GM23248 (cell line): ENCODE measurements at regions of chr5 and their contacts with region 1.

Region 1: GRCh38 chr5:174418928-174419796 is 305.2 kb upstream of the MSX2 start:
- DNase-seq: peak; percentile 89
- H3K4me3 ChIP-seq: no peak overlapping the region
- H3K27ac ChIP-seq: no peak overlapping the region
- H3K4me1 ChIP-seq: no peaks in the 10 kb centered on the region
- H3K27me3 ChIP-seq: peaks cover 30% of the 10 kb centered on the region

Region 2: GRCh38 chr5:174793684-174794328 is 374.6 kb after region 1 on chr5:
- in situ Hi-C with region 1: loop called (anchors 10 kb)
- DNase-seq: peak; percentile 83
- H3K4me3 ChIP-seq: no peak overlapping the region
- H3K27ac ChIP-seq: no peak overlapping the region
- H3K4me1 ChIP-seq: peaks cover 11% of the 10 kb centered on the region
- H3K27me3 ChIP-seq: no peaks in the 10 kb centered on the region

Region 3: DNA sequence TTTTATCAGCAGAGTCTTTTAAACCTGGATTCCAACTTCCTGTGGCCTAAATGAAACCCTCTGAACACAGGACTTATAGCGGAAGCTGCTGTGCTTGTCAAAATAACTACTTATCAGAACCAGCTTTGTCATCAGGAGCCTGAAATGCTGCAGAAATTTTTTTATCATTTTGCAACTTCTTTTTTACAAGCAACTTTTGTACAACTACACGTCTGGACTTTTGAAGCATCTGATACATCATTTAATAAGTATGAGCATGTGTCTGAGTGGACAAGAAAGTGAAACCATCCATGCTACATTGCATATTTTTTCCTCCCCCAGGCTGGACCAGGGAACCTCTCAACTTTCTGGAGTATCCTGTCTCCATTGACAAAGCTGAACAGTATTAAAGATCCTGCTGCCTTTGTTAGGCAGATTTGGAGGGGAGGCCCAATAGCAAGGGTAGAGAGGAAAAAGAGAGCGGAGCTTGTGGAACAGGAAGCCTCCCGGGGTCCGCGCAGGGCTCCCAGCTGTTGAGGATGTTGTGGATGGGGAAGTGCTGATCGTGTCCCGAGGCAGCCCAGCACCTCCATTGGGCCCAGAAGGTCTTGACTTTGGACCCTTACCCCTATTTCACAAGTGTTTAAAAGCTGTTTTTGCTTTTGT is 501.9 kb after region 1 on chr5:
- in situ Hi-C with region 1: loop called (anchors 10 kb)
- DNase-seq: peak; percentile 9
- H3K4me3 ChIP-seq: 0 out of 2 replicates have a peak overlapping the region, but pooled peaks have one; percentile 7
- H3K27ac ChIP-seq: no peak overlapping the region
- H3K4me1 ChIP-seq: peaks cover 6% of the 10 kb centered on the region; the same call in 1 of the 2 replicates
- H3K27me3 ChIP-seq: no peaks in the 10 kb centered on the region; the same call in 1 of the 2 replicates